Activated CD4-positive, alpha-beta T cell treated with anti-CD3 and anti-CD28 coated beads, Interleukin-2, amount 10 ng/mL, durations not matched to agents 24 days and 14 days (primary cell): ENCODE measurements at regions of chr4 and their contacts with region 1.

Region 1: GRCh38 chr4:163107754-163108153 is 58.9 kb downstream of the NAF1 start:
- DNase-seq: peak; percentile 76
- H3K4me3 Mint-ChIP-seq: no peak overlapping the region
- H3K27ac Mint-ChIP-seq: no peak overlapping the region
- H3K4me1 Mint-ChIP-seq: peaks cover 23% of the 10 kb centered on the region
- H3K27me3 Mint-ChIP-seq: no peaks in the 10 kb centered on the region

Region 2: GRCh38 chr4:162969194-162969593 is 138.6 kb before region 1 on chr4:
- intact Hi-C with region 1: no loop called
- DNase-seq: no peak
- H3K4me3 Mint-ChIP-seq: no peak overlapping the region
- H3K27ac Mint-ChIP-seq: no peak overlapping the region
- H3K4me1 Mint-ChIP-seq: no peaks in the 10 kb centered on the region
- H3K27me3 Mint-ChIP-seq: no peaks in the 10 kb centered on the region

Region 3: DNA sequence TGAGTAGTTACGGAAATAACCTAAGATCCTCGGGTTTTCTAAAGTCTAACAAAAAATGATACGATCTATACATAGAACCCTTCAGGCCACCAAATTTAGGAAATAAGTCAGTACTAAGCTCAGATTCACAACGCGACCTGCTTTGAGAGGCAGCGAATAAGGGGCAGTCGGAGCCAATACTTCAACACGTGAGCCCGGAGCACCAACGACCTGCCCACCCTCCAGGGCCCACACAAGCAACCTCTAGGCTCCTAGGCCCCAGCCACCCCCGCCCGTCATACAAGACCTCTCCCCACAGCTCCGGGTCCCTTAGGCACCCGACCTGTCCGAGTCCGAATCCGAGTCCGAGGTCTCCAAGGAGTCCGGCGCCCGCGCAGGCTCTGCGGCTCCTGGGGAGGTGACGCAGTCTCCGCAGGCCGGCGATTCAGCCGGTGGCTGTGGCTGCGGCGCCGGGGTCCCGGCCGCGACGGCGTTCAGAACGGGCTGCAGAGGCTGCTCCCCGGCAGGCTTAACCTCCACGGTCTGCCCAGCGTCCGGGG is 58.4 kb after region 1 on chr4:
- intact Hi-C with region 1: loop called (anchors 2 kb)
- DNase-seq: peak; percentile 87
- H3K4me3 Mint-ChIP-seq: peak overlapping the region; percentile 84
- H3K27ac Mint-ChIP-seq: peak overlapping the region; percentile 97
- H3K4me1 Mint-ChIP-seq: peaks cover 41% of the 10 kb centered on the region
- H3K27me3 Mint-ChIP-seq: no peaks in the 10 kb centered on the region